WTC11 (cell line): ENCODE measurements at regions of chr11 and their contacts with region 1.

Region 1: GRCh38 chr11:74570266-74571061 is 21.9 kb upstream of the POLD3 start:
- DNase-seq: peak; percentile 53
- ATAC-seq: peak; percentile 95
- H3K4me3 Mint-ChIP-seq: no peak overlapping the region
- H3K27ac Mint-ChIP-seq: no peak overlapping the region
- H3K4me1 Mint-ChIP-seq: no peaks in the 10 kb centered on the region
- H3K27me3 Mint-ChIP-seq: no peaks in the 10 kb centered on the region
- CTCF ChIP-seq: no peak

Region 2: GRCh38 chr11:74255741-74256369 is 314.6 kb before region 1 on chr11:
- CTCF ChIA-PET with region 1: interaction called, 26 read pairs
- POLR2A ChIA-PET with region 1: no interaction called
- DNase-seq: peak; percentile 50
- ATAC-seq: peak; percentile 63
- H3K4me3 Mint-ChIP-seq: no peak overlapping the region
- H3K27ac Mint-ChIP-seq: no peak overlapping the region
- H3K4me1 Mint-ChIP-seq: no peaks in the 10 kb centered on the region
- H3K27me3 Mint-ChIP-seq: peaks cover 7% of the 10 kb centered on the region
- CTCF ChIP-seq: peak; percentile 84

Region 3: GRCh38 chr11:74443071-74443864 is 127.2 kb before region 1 on chr11:
- CTCF ChIA-PET with region 1: interaction called, 212 read pairs
- POLR2A ChIA-PET with region 1: no interaction called
- DNase-seq: no peak
- ATAC-seq: peak; percentile 81
- H3K4me3 Mint-ChIP-seq: no peak overlapping the region
- H3K27ac Mint-ChIP-seq: no peak overlapping the region; the same call in 1 of the 2 replicates
- H3K4me1 Mint-ChIP-seq: peaks cover 17% of the 10 kb centered on the region
- H3K27me3 Mint-ChIP-seq: no peaks in the 10 kb centered on the region
- CTCF ChIP-seq: no peak

Region 4: DNA sequence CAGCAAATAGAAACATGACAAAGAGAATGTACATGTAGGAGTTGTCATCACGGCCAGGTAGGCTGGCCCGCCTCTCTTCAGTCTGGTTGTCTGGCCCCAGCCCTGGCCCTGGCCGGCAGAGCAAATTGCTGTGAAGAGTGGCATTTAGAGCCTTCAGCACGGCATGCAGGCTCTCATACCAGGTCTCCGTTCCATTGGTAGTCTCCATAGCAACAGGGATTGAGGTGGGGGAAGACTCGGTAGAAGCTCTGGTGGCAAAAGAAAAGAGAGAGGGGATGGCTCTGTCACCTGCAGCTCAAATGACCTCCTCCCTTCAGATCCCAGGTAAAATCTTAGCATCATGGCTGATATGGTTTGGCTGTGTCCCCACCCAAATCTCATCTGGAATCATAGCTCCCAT is 113.1 kb before region 1 on chr11:
- CTCF ChIA-PET with region 1: interaction called, 212 read pairs
- POLR2A ChIA-PET with region 1: no interaction called
- DNase-seq: no peak
- ATAC-seq: no peak
- H3K4me3 Mint-ChIP-seq: no peak overlapping the region
- H3K27ac Mint-ChIP-seq: no peak overlapping the region
- H3K4me1 Mint-ChIP-seq: peaks cover 3% of the 10 kb centered on the region
- H3K27me3 Mint-ChIP-seq: no peaks in the 10 kb centered on the region; the same call in 1 of the 2 replicates
- CTCF ChIP-seq: no peak

Region 5: DNA sequence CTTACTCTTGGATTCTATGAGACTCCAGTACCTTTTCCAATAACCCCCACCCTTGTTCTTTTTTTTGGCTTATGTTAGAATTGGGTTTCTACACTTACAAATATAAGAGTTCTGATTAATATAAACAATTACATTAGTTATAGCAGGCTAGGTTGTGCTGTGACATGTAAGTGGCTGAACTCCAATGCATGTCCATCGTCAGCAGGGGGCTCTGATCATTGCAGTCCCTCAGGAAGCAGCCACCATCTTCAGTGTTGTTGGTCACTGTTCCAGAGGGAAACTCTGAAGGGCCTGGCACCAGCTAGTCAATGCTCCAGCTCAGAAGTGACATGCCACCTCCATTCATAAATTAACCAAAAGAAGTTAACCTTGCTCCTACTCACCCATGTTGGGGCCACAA is 82.6 kb before region 1 on chr11:
- CTCF ChIA-PET with region 1: interaction called, 29 read pairs
- POLR2A ChIA-PET with region 1: no interaction called
- DNase-seq: peak; percentile 26
- ATAC-seq: peak; percentile 63
- H3K4me3 Mint-ChIP-seq: no peak overlapping the region
- H3K27ac Mint-ChIP-seq: no peak overlapping the region
- H3K4me1 Mint-ChIP-seq: peaks cover 14% of the 10 kb centered on the region
- H3K27me3 Mint-ChIP-seq: no peaks in the 10 kb centered on the region
- CTCF ChIP-seq: no peak

Region 6: GRCh38 chr11:74492974-74493790 is 77.3 kb before region 1 on chr11 and contains the start of gene LIPT2:
- CTCF ChIA-PET with region 1: interaction called, 29 read pairs
- POLR2A ChIA-PET with region 1: no interaction called
- DNase-seq: peak; percentile 97
- ATAC-seq: peak; percentile 94
- H3K4me3 Mint-ChIP-seq: peak within 1 kb of the TSS; percentile 72
- H3K27ac Mint-ChIP-seq: peak within 1 kb of the TSS; percentile 97
- H3K4me1 Mint-ChIP-seq: peaks cover 20% of the 10 kb centered on the region
- H3K27me3 Mint-ChIP-seq: no peaks in the 10 kb centered on the region; the same call in 1 of the 2 replicates
- CTCF ChIP-seq: no peak
- total RNA-seq, gene LIPT2: 9.3 to 9.6 TPM (median 9.5 TPM) in 3 replicates

Region 7: GRCh38 chr11:74540270-74540669 is 30.2 kb before region 1 on chr11:
- CTCF ChIA-PET with region 1: no interaction called
- POLR2A ChIA-PET with region 1: no interaction called
- DNase-seq: no peak
- ATAC-seq: no peak
- H3K4me3 Mint-ChIP-seq: no peak overlapping the region
- H3K27ac Mint-ChIP-seq: no peak overlapping the region
- H3K4me1 Mint-ChIP-seq: peaks cover 16% of the 10 kb centered on the region
- H3K27me3 Mint-ChIP-seq: no peaks in the 10 kb centered on the region; the same call in 1 of the 2 replicates
- CTCF ChIP-seq: no peak